ENCODE measurements at regions of chr11 and their contacts with region 1.

Region 1: DNA sequence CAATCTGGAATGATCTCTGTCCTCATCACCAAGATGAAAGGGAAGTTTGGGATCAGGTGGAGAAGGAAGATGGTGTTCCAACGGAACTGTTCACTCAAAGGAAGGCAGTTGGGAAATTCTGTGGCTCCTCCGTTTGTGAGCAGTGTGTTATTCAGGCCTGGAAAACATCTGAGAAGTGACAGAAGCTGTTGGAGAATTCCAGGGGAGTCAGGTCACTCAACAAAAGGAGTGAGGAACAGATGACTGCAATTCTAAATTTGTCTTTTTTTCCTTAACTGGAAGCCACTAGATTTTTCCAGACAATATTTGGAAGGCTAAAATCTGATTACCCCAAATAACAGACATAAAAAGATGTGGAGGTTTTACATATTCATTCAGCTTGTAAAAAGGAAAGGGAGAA is 107.8 kb downstream of the CD44 start:
- DNase-seq: no peak
- ATAC-seq: no peak
- H3K4me3 ChIP-seq: no peak overlapping the region
- H3K4me3 Mint-ChIP-seq: peak overlapping the region in 1 of 3 donors; percentile 55
- H3K27ac ChIP-seq: peak overlapping the region; percentile 95
- H3K27ac Mint-ChIP-seq: peak overlapping the region; percentile 96
- H3K4me1 ChIP-seq: peaks cover 13 to 48% of the 10 kb centered on the region in 2 experiments
- H3K4me1 Mint-ChIP-seq: peaks cover 47 to 80% (median 69%) of the 10 kb centered on the region in 3 donors
- H3K27me3 ChIP-seq: no peaks in the 10 kb centered on the region
- H3K27me3 Mint-ChIP-seq: no peaks in the 10 kb centered on the region

Region 2: DNA sequence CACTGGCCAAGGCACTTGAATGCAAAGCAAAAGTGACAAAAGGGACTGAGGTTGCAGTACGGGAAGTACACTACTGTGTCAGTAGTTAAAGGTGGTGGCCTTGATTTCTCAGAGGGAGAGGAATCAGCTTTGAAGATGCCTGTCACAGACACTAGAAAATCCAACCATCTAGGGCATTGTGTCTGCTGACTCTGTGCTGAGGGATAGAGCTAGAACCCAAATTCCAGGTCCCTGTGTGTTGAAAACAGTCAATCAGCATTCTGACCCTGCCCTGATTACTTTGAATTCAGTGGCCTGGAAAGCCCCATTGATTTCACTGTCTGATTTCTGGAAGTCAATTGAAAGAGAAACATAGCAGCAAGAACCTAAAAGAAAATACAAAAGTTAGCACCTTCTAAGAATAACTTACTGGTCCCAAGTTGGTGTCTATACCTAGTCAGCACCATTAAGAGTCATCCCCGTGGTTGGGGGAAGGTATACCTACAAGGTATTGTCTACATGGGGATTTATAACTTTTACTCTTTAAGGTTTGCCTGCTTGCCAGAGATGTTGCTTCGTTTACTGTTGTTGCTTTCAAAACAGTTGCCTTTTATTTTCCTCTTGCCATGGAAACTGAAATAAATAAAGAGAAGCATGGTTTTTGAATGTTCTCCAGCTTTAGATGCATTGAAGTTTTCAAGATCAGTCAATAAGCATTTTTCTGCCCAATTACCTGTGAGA is 233.1 kb before region 1 on chr11:
- CTCF ChIA-PET with region 1: interaction called in 1 of 2 experiments, 3 read pairs
- POLR2A ChIA-PET with region 1: interaction called in 1 of 2 experiments, 10 read pairs
- DNase-seq: peak in 19 of 35 experiments; percentile 5 to 75 (median 32)
- ATAC-seq: peak; percentile 38 to 64 (median 47)
- H3K4me3 ChIP-seq: no peak overlapping the region
- H3K4me3 Mint-ChIP-seq: peak overlapping the region; percentile 21 to 62 (median 22)
- H3K27ac ChIP-seq: peak overlapping the region; percentile 90
- H3K27ac Mint-ChIP-seq: peak overlapping the region; percentile 85 to 86
- H3K4me1 ChIP-seq: peaks cover 13 to 23% of the 10 kb centered on the region in 2 experiments
- H3K4me1 Mint-ChIP-seq: peaks cover 23 to 38% (median 32%) of the 10 kb centered on the region in 3 donors
- H3K27me3 ChIP-seq: no peaks in the 10 kb centered on the region
- H3K27me3 Mint-ChIP-seq: no peaks in the 10 kb centered on the region

Region 3: GRCh38 chr11:35040221-35040942 is 206.4 kb before region 1 on chr11:
- CTCF ChIA-PET with region 1: interaction called in 1 of 2 experiments, 3 read pairs
- POLR2A ChIA-PET with region 1: interaction called in 1 of 2 experiments, 10 read pairs
- DNase-seq: peak in 33 of 35 experiments; percentile 36 to 85 (median 50)
- ATAC-seq: peak; percentile 86 to 89 (median 88)
- H3K4me3 ChIP-seq: peak overlapping the region; percentile 51 to 53
- H3K4me3 Mint-ChIP-seq: peak overlapping the region; percentile 78 to 86 (median 80)
- H3K27ac ChIP-seq: peak overlapping the region; percentile 97
- H3K27ac Mint-ChIP-seq: peak overlapping the region; percentile 95 to 99
- H3K4me1 ChIP-seq: peaks cover 27 to 58% of the 10 kb centered on the region in 2 experiments
- H3K4me1 Mint-ChIP-seq: peaks cover 54 to 82% (median 69%) of the 10 kb centered on the region in 3 donors
- H3K27me3 ChIP-seq: no peaks in the 10 kb centered on the region
- H3K27me3 Mint-ChIP-seq: no peaks in the 10 kb centered on the region

Region 4: GRCh38 chr11:35214792-35215193 is 32.0 kb before region 1 on chr11:
- CTCF ChIA-PET with region 1: no interaction called
- POLR2A ChIA-PET with region 1: no interaction called
- DNase-seq: peak in 3 of 35 experiments; percentile 12 to 30 (median 26)
- ATAC-seq: peak in 3 of 4 experiments; percentile 9 to 37 (median 33)
- H3K4me3 ChIP-seq: no peak overlapping the region
- H3K4me3 Mint-ChIP-seq: peak overlapping the region in 2 of 3 donors; percentile 5 to 38
- H3K27ac ChIP-seq: peak overlapping the region; percentile 33
- H3K27ac Mint-ChIP-seq: peak overlapping the region; percentile 94 to 97
- H3K4me1 ChIP-seq: peaks cover 34 to 48% of the 10 kb centered on the region in 2 experiments
- H3K4me1 Mint-ChIP-seq: peaks cover 72 to 89% (median 83%) of the 10 kb centered on the region in 3 donors
- H3K27me3 ChIP-seq: no peaks in the 10 kb centered on the region
- H3K27me3 Mint-ChIP-seq: no peaks in the 10 kb centered on the region

Region 5: DNA sequence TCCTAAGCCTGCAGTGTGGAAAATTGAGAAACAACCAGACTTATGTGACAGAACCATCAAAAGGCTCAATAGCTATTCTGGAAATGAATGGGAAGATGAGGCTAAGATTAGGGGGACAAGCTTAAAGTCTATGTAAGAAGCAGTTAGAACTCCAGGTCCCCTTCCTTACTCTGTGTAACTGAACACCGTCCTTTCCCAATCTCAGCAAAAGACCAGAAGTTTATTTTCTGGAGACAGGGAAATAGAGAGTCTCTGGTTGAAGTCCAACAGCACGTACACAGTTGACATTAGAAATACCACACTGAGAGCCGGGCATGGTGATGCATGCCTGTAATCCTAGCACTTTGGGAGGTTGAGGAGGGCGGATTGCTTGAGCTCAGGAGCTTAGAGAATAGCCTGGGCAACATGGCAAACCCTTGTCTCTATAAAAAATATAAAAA is 13.8 kb before region 1 on chr11:
- CTCF ChIA-PET with region 1: interaction called, 6 to 40 read pairs
- POLR2A ChIA-PET with region 1: interaction called, 3 to 42 read pairs
- DNase-seq: no peak
- ATAC-seq: no peak
- H3K4me3 ChIP-seq: no peak overlapping the region
- H3K4me3 Mint-ChIP-seq: no peak overlapping the region
- H3K27ac ChIP-seq: no peak overlapping the region
- H3K27ac Mint-ChIP-seq: peak overlapping the region in 1 of 2 donors; percentile 4
- H3K4me1 ChIP-seq: peaks cover 15 to 20% of the 10 kb centered on the region in 2 experiments
- H3K4me1 Mint-ChIP-seq: peaks cover 50 to 61% (median 57%) of the 10 kb centered on the region in 3 donors
- H3K27me3 ChIP-seq: no peaks in the 10 kb centered on the region
- H3K27me3 Mint-ChIP-seq: no peaks in the 10 kb centered on the region

Region 6: DNA sequence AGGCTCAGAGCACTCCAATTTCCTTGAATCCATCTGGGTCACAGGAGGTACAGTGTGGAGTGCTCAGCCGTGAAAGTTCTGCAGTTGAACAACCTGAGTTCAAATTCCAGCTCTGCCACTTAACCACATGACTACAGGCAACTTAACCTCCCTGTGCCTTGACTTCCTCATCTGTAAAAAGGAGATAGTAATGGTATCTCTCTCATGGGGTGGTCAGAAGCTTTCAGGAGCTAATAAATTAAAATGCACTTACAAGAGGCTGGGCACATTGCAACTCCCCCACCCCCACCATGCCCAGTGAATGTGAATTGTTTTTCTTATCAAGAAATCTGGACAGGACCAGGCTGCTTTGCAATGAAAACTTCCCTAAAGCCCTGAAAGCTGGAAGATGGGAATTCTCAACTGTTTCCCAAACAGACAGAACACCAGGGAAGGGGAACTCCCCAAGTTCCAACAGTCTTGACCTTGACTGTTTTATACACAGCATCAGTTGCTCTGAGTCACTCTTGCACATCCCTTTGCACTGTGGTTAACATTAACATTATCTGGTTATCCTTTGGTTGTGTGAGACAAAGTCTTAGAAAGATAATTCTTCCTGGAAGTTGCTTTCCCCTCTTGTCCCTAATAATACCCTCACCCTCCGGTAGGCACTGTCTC is 35.6 kb after region 1 on chr11:
- CTCF ChIA-PET with region 1: no interaction called
- POLR2A ChIA-PET with region 1: no interaction called
- DNase-seq: no peak
- ATAC-seq: no peak
- H3K4me3 ChIP-seq: no peak overlapping the region
- H3K4me3 Mint-ChIP-seq: no peak overlapping the region
- H3K27ac ChIP-seq: no peak overlapping the region
- H3K27ac Mint-ChIP-seq: no peak overlapping the region
- H3K4me1 ChIP-seq: no peaks in the 10 kb centered on the region
- H3K4me1 Mint-ChIP-seq: peaks cover 4 to 7% (median 5%) of the 10 kb centered on the region in 3 donors
- H3K27me3 ChIP-seq: no peaks in the 10 kb centered on the region
- H3K27me3 Mint-ChIP-seq: no peaks in the 10 kb centered on the region

Measured in T-cell (primary cell).